Adrenal gland (tissue), 19 donors: ENCODE measurements at regions of chr12 and their contacts with region 1.

Region 1: DNA sequence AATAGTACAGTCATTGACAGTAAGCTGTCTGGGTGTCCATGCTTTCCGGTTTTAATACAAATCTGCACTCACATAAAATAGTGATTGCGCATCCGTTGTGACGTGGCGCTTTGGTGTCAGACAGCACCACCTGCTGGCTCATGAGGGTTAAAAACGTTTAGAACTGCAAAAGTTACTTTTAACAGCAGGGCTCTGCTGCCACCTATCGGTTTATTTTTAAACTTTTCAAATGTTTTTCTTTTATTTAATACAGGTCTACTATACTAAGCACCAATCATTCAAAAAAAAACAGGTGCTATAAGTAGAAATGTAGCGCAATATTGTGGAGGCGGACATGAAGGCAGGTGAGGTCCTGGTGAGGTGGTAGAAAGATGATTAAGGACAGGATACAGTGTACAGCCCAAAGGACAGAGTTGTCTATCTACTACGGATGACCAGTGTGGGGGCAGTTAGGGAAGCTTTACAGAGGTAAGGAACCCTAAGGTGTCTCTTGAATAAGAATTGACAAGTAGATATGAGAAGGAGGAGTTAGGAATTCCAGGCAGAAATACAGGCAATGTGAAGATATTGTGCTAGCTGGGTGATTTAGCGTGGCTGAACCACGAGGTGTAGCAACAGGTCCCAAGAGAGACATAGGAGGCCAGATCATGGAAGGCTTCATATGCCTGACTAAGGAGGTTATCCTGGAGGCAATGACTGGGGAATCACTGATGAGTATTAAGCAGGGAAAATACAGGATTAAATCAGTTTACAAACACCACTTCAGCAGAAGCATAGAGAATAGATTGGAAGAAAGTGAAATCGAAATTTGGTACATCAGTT is 91.5 kb upstream of the PRB2 start:
- DNase-seq: peak; percentile 83 to 95 (median 88)
- H3K4me3 ChIP-seq: no peak overlapping the region
- H3K27ac ChIP-seq: no peak overlapping the region
- H3K4me1 ChIP-seq: peaks cover 4 to 9% of the 10 kb centered on the region in 2 donors
- H3K27me3 ChIP-seq: no peaks in the 10 kb centered on the region
- CTCF ChIP-seq: peak; percentile 92 to 99 (median 99)
- POLR2A ChIP-seq: no peak

Region 2: GRCh38 chr12:11228296-11228879 is 258.4 kb before region 1 on chr12:
- intact Hi-C with region 1: loop called in 1 of 2 experiments (anchors 5 kb)
- DNase-seq: peak; percentile 28 to 74 (median 50)
- H3K4me3 ChIP-seq: no peak overlapping the region
- H3K27ac ChIP-seq: no peak overlapping the region
- H3K4me1 ChIP-seq: peaks cover 0 to 4% of the 10 kb centered on the region in 2 donors
- H3K27me3 ChIP-seq: no peaks in the 10 kb centered on the region
- CTCF ChIP-seq: peak; percentile 17 to 77 (median 64)
- POLR2A ChIP-seq: no peak